ENCODE measurements at regions of chr6 and their contacts with region 1.

Region 1: DNA sequence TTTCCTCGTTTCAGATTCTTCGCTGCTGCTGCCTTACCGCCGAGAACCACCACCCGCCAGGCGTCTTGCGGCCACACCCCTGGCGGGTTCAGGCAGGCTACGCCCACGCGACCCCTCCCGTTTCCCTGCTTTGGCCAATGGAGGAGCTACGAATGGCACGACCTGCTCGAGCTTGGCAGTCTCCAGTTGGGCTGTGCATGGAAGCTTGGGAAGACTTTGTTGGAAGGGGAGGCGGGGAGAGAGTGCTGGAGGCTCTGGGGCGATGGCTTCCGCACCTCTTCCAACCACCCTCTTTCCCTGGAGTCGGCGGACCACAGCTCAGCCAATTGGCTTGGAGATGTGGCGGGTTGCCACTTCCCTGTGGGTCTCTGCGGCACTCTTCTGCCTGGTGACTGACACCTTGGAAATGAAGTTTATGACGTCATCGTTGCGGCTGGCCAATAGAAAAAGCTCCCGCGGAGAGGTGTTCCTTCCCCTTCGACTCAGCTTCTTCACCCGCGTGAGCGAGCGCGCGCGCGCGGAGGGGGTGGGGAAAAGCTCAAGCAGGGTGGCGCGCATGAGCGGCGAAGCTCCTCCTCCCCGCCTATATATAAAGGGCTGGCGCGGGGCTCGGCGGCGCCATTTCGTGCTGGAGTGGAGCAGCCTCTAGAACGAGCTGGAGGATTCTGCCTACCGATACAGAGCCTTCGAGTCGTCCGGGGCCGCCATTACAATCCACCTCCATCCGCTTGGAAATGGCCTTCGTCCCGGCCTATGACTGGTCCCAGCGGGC is 3.4 kb downstream of the BRD2 start:
- DNase-seq: peak; percentile 95
- CTCF ChIP-seq: no peak

Region 2: GRCh38 chr6:32637219-32637880 is 334.4 kb before region 1 on chr6 and contains the start of gene HLA-DQA1:
- CTCF ChIA-PET with region 1: no interaction called
- POLR2A ChIA-PET with region 1: no interaction called
- DNase-seq: peak; percentile 78
- CTCF ChIP-seq: no peak

Region 3: GRCh38 chr6:32838114-32838958 is 133.4 kb before region 1 on chr6 and contains the start of gene TAP2:
- CTCF ChIA-PET with region 1: interaction called, 23 read pairs
- POLR2A ChIA-PET with region 1: interaction called, 32 read pairs
- DNase-seq: peak; percentile 94
- CTCF ChIP-seq: peak; percentile 98

Region 4: DNA sequence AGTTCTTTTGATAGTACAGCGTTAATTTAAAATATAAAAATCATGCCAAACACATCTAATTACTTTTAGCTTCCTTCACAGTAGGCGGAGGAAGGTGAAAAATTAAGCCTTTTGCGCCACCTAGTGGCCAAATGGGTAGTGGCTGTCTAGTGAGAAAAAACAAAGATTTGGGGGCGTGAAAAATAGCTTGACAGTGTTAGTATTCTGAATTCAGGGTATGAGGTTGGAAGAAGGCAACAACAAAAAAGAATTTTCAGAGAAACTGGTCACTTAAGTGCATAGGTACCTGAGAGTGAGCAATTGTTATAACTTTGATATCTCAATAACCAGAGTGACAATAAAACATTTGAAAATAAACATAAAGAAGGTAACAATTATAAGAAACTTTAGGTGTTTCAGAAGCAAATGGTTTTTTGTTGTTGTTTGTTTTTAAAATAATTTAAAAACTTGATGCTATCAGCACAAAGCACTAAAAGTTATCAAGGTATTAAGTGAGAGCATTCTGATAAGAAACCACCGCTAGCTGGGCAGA is 103.4 kb before region 1 on chr6:
- CTCF ChIA-PET with region 1: interaction called, 5 read pairs
- POLR2A ChIA-PET with region 1: interaction called, 14 read pairs
- DNase-seq: peak; percentile 52
- CTCF ChIP-seq: peak; percentile 88

Region 5: GRCh38 chr6:32912951-32913350 is 58.8 kb before region 1 on chr6:
- CTCF ChIA-PET with region 1: interaction called, 3 read pairs
- POLR2A ChIA-PET with region 1: interaction called, 17 read pairs
- DNase-seq: no peak
- CTCF ChIP-seq: no peak

Region 6: DNA sequence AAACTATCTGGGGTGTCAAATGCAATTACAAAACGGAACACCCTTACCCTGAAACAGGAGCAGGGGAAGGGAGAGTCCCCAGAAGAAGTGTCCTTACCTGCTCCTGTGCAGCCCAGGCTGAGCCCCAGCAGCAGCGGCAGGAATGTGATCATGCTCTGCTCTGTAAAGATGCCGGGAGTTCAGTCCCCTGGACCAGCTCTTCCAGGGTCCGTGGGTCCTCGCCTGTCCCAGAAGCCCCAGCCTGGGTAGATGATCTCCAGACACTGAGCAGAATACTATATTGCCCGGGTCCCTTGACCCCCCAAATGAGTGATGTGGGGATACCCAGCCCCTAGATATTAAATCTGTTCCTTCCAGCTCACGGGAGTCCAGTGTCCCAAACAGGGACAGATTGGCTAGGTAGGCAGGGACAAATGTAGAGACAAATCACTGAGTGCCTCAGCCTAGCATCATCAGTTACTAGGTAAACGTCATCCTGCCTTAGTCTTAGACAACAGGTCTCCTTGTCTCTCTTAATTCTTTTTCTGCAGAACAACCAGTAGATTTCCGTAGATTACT is 31.0 kb before region 1 on chr6 and contains the start of gene HLA-DMB:
- CTCF ChIA-PET with region 1: interaction called, 20 read pairs
- POLR2A ChIA-PET with region 1: interaction called, 211 read pairs
- DNase-seq: peak; percentile 87
- CTCF ChIP-seq: no peak

Region 7: DNA sequence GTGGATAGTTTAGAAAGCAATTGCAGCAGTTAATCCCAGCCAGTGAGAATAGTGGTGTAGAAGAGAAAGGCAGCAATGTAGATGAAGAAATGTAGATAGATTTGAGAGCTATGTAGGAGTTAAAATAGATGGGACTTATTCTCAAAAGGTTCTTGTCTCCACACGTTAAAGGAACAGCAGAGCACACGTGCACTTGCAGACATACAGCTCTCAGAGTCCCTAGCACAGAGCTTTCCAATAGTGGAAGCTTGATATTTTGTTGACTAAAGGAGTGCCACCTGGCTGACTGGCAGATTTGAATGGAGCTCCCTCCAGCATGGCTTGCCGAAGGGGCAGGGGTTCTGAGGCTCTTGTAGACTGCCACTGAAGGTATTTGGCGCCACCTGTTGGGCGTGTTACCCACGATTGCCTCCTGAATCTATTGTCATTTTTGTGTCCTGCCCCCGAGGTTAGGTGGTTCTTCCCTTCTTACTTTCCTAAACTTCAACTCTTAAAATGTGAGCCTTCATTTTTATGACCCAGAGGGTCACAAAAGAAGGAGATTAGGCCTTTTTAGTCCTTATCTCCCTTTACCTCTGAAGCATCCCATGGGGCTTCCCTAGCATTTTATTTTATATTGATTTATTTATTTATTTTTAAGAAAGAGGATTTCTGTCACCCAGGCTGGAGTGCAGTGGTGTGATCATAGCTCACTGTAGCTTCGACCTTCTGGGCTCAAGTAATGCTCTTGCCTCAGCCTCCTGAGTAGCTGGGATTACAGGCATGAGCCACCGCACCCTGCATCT is 13.0 kb after region 1 on chr6:
- CTCF ChIA-PET with region 1: interaction called, 77 read pairs
- POLR2A ChIA-PET with region 1: interaction called, 271 read pairs
- DNase-seq: peak; percentile 75
- CTCF ChIP-seq: peak; percentile 80

Region 8: GRCh38 chr6:33075568-33076405 is 104.0 kb after region 1 on chr6 and contains the start of gene HLA-DPB1:
- CTCF ChIA-PET with region 1: no interaction called
- POLR2A ChIA-PET with region 1: interaction called, 15 read pairs
- DNase-seq: peak; percentile 86
- CTCF ChIP-seq: no peak

Region 9: DNA sequence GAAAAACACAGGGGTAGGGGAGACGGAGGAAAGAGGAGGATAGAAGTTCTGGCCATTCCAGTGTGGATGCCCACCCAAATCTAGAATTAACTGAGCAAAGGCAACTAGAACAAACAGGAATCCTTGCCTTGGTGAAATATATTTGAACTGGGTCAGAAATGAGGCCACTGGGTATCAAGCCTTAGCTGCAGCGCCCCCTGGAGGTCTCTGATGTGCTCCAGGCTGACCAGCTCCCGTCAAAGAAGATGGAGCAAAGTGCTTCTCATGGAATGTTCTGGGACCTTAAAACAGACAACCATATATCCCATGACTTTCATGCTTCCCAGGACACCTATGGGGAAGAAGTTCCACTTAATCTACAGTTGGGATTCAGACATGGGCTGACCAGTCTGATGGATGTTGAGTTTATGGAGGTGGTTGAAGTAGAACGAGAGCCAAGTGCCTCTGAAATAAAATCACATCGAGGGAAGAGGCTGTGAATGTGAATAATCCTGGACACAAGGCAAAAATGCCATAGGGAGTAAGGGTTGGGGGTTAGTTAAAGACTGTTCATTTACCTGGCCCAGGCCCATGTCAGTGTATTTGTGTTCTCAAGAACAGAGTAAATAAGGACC is 154.4 kb after region 1 on chr6:
- CTCF ChIA-PET with region 1: no interaction called
- POLR2A ChIA-PET with region 1: no interaction called
- DNase-seq: peak; percentile 64
- CTCF ChIP-seq: peak; percentile 58

Region 10: DNA sequence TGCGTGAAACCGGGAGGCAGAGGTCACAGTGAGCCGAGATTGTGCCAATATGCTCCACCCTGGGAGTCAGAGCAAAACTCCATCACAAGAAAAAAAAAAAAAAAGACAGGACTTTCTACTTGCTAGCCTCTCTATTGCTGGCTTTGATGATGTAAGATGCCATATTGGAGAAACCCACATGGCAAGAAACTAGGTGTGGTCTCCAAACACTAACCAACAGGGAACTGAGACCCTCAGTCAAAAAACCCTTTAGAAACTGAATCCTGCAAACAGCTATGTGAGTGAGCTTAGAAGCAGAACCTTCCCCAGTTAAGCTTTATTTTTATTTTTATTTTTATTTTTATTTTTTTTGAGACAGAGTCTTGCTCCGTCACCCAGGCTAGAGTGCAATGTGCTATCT is 364.1 kb after region 1 on chr6:
- CTCF ChIA-PET with region 1: no interaction called
- POLR2A ChIA-PET with region 1: no interaction called
- DNase-seq: no peak
- CTCF ChIP-seq: no peak